ENCODE measurements at regions of chr19 and their contacts with region 1.

Region 1: GRCh38 chr19:33302175-33302973 is at the start of gene CEBPA:
- DNase-seq: peak; percentile 82
- H3K4me3 ChIP-seq: peak within 1 kb of the TSS; percentile 87
- H3K27ac ChIP-seq: peak within 1 kb of the TSS; percentile 91
- H3K4me1 ChIP-seq: no peaks in the 10 kb centered on the region
- H3K27me3 ChIP-seq: no peaks in the 10 kb centered on the region
- CTCF ChIP-seq: no peak
- total RNA-seq, gene CEBPA: 67.1 to 76.4 TPM

Region 2: DNA sequence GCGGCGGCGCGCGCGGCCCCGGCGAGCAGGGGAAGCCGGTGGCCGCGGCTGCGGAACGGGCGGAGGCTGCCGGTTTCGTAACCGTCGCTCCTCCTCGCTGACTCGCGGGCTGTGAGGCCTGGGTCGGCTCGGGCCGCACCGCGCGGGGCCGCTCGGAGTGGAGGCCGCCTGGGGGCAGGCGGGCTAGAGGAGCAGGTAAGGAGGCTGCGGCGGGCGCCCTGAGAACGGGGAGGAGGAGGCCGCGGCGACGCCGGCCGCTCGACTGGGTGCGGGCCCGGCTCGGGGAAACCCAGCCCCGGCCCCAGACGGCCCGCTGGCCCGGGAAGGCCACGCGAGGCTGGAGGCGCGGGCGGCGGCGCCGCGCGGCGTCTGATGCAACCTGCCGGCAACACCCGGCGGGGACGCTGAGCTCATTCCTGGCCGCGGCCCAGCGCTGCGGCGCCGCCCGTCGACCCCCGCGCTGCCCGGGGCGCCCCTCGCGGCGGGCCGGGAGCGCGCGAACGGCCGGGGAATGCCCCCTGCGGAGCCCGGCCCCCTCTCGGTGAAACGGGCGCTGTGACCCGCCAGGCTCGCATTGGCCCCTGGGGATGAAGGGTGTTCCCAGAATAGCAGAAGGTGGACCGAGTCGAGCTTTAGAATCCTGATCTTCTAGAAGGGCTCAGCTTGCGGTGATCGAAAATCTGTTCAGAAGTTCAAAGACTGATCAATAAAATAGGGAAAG is 71.5 kb after region 1 on chr19 and contains the start of gene CEBPG:
- intact Hi-C with region 1: loop called (anchors 5 kb)
- DNase-seq: no peak
- H3K4me3 ChIP-seq: peak within 1 kb of the TSS; percentile 56
- H3K27ac ChIP-seq: peak within 1 kb of the TSS; percentile 92
- H3K4me1 ChIP-seq: peaks cover 9% of the 10 kb centered on the region
- H3K27me3 ChIP-seq: no peaks in the 10 kb centered on the region
- CTCF ChIP-seq: no peak
- total RNA-seq, gene CEBPG: 62.1 to 72.3 TPM

Region 3: DNA sequence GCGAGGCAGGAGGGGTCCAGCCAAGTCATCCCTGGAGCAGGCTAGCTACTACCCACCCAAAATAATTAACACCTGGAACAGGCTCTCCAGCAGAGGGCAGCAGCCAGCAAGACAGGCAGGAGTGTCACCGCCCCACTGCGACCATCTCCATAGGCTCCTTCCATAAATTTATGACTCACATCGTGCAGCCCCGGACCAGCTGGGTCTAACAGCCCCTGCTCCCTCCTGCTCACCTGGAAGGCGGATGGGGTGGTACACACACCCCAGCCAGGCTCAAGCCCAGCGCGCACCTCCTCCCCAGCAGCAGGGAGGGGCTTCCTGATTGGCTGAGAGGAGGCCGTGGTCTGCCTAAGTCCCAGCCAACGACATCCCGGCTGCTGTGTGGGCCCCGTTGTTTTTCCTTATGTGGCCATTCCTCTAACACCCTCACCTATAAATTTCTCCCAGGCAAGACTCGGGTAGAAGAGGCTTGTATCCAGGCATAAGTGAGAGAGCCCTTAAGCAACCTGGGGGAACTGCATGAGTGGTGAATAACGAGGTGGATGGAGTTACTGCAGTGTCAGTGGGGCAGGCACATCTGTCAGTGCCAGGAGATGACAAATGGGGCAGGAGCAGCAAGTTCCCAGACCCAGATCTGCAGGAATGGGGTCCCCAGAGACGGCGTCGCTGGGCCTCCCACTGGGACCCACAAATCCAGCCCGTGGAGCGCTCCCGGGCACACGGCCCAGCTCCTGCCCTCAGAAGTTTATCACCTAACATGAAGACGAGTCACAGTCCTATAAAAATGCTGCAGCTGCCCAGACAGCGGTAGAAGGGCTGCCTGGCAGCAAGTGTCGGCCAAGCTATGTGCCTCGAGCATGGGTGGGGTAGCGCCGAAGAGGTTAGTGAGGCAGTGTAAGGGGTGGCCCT is 114.2 kb after region 1 on chr19:
- intact Hi-C with region 1: no loop called
- DNase-seq: peak; percentile 79
- H3K4me3 ChIP-seq: no peak overlapping the region
- H3K27ac ChIP-seq: no peak overlapping the region
- H3K4me1 ChIP-seq: no peaks in the 10 kb centered on the region
- H3K27me3 ChIP-seq: no peaks in the 10 kb centered on the region
- CTCF ChIP-seq: peak; percentile 65

Measured in colonic mucosa (tissue), 4 donors.